ENCODE measurements at regions of chr11 and their contacts with region 1.

Region 1: DNA sequence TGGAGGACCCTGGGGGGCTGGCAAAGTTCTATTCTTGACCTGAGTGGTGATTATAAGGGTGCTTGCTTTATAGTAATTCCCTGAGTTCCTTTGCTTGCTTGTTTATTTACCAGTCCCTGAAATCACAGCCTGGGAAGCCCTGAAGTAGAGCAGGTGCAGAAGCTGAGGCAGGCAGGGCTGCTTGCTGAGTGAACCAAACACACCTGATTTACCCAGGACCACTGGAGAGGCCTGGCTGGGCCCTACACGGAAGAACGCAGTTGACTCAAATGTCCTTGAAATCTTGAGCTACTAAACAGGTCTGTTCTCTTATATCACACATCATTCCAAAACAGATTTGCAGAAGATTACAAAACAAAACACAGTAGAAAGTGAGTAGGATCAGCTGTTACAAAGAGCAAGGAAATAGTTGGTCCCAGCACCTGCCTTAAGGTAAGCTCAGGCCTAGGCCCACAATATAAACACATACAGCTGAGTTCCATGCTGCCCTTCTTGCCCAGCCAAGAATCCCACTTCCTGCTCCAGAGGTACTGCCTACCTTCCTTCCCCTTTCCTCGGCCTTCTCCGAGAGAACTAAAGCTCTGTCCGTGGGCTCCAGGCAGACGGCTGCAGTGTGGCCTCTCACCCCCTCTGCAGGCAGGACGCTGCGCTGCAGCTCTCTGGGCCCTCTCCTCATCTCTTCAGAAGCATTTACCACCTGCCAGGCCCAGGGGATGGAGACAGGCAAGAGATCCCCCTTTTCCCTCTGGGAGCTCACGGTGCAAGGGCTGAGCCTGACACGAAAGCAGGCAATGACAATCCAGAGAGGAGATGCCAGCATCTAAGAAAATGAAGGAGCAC is 46.1 kb upstream of the SCUBE2 start:
- DNase-seq: peak; percentile 68 to 74
- ATAC-seq: peak; percentile 89 to 95
- H3K4me3 ChIP-seq: no peak overlapping the region
- H3K27ac ChIP-seq: peak overlapping the region in 1 of 2 experiments; percentile 83; a peak in 4 of 6 replicates
- H3K4me1 ChIP-seq: peaks cover 30% of the 10 kb centered on the region
- CTCF ChIP-seq: peak; percentile 84
- EP300 ChIP-seq: no peak
- POLR2A ChIP-seq: no peak
- RAD21 ChIP-seq: peak; percentile 86 to 87

Region 2: GRCh38 chr11:8906629-8907028 is 230.9 kb before region 1 on chr11:
- CTCF ChIA-PET with region 1: no interaction called
- POLR2A ChIA-PET with region 1: no interaction called
- DNase-seq: peak; percentile 65 to 84
- ATAC-seq: peak in 1 of 2 experiments; percentile 12; a peak in 3 of 6 replicates
- H3K4me3 ChIP-seq: no peak overlapping the region
- H3K27ac ChIP-seq: peak overlapping the region; percentile 66 to 83
- H3K4me1 ChIP-seq: peaks cover 42% of the 10 kb centered on the region
- CTCF ChIP-seq: no peak
- EP300 ChIP-seq: peak; percentile 55 to 80; a peak in 3 of 5 replicates
- POLR2A ChIP-seq: no peak
- RAD21 ChIP-seq: 0 out of 5 replicates have a peak, but pooled peaks of 1 of the 2 experiments have one; percentile 10

Region 3: GRCh38 chr11:8964324-8965320 is 172.9 kb before region 1 on chr11 and contains the start of gene TMEM9B:
- CTCF ChIA-PET with region 1: interaction called, 9 read pairs
- POLR2A ChIA-PET with region 1: interaction called, 12 read pairs
- DNase-seq: peak; percentile 87 to 92
- ATAC-seq: peak; percentile 93 to 94
- H3K4me3 ChIP-seq: peak within 1 kb of the TSS; percentile 78
- H3K27ac ChIP-seq: peak within 1 kb of the TSS; percentile 96
- H3K4me1 ChIP-seq: peaks cover 23% of the 10 kb centered on the region
- CTCF ChIP-seq: no peak
- EP300 ChIP-seq: no peak
- POLR2A ChIP-seq: peak; percentile 65
- RAD21 ChIP-seq: no peak; a peak in 1 of 5 replicates
- polyA plus RNA-seq, gene TMEM9B: 43.4 and 47.3 TPM in 2 replicates

Region 4: DNA sequence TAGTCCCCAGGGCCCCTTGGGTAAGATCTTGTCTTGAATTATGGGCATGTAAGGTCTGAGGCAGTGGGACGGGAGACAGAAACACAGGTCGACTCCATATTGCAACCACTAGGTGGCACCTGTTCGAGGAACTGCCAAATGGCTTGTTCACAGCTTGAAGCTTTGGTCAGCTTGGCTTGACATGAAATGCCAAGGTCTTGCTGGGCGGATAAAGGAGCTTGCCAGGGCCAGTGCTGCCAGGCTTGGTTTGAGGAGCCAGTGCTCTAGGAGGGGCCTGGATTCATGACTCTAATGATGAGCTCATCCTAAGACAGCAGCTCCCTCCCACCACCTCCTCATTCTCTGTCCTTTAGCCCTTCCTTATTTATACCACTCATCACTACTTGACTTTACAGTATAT is 121.8 kb before region 1 on chr11:
- CTCF ChIA-PET with region 1: interaction called, 160 read pairs
- POLR2A ChIA-PET with region 1: interaction called, 5 read pairs
- DNase-seq: peak; percentile 84 to 86
- ATAC-seq: peak; percentile 95 to 98
- H3K4me3 ChIP-seq: no peak overlapping the region
- H3K27ac ChIP-seq: no peak overlapping the region
- H3K4me1 ChIP-seq: no peaks in the 10 kb centered on the region
- CTCF ChIP-seq: peak; percentile 82
- EP300 ChIP-seq: no peak
- POLR2A ChIP-seq: no peak
- RAD21 ChIP-seq: peak; percentile 67 to 68

Region 5: GRCh38 chr11:9030601-9031000 is 106.9 kb before region 1 on chr11:
- CTCF ChIA-PET with region 1: interaction called, 12 read pairs
- POLR2A ChIA-PET with region 1: no interaction called
- DNase-seq: no peak
- ATAC-seq: no peak
- H3K4me3 ChIP-seq: no peak overlapping the region
- H3K27ac ChIP-seq: no peak overlapping the region
- H3K4me1 ChIP-seq: no peaks in the 10 kb centered on the region
- CTCF ChIP-seq: no peak
- EP300 ChIP-seq: no peak
- POLR2A ChIP-seq: no peak
- RAD21 ChIP-seq: no peak

Region 6: DNA sequence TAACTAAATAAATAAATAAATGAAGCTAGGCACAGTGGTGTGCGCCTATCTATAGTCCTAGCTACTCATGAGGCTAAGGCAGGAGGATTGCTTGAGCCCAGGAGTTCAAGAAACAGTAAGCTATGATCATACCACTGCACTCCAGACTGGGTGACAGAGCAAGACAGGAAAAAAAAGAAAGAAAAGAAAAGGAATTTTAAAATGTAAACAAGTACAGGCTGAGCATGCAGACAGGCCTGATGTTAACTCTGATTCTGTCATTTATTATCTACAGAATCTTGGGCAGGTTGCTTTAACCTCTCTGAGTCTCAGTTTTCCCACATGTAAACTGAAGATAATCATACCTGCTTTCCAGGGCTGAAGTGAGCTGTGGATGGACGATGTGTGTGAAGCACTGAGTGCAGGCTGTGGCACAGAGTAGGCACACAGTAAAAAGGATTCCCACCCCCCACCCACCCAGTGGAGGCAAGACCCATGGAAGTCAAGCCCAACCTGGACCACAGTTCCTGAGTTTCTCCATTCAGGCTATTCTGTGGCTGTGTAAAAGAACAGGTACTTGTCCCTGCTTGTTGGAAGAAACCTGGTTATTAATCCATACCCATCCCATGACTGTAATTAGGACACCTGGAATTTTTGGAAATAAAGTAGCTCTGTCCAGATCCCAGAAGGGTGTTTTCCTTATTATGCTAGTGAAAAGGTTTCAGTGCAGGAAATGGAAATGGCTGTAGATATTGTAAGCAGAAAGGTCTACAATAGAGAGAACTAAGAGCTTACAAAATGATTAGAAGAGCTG is 27.4 kb before region 1 on chr11:
- CTCF ChIA-PET with region 1: interaction called, 12 read pairs
- POLR2A ChIA-PET with region 1: no interaction called
- DNase-seq: no peak
- ATAC-seq: no peak
- H3K4me3 ChIP-seq: no peak overlapping the region
- H3K27ac ChIP-seq: no peak overlapping the region
- H3K4me1 ChIP-seq: no peaks in the 10 kb centered on the region
- CTCF ChIP-seq: no peak
- EP300 ChIP-seq: no peak
- POLR2A ChIP-seq: no peak
- RAD21 ChIP-seq: no peak

Region 7: GRCh38 chr11:9150501-9150900 is 13.0 kb after region 1 on chr11:
- CTCF ChIA-PET with region 1: interaction called, 16 read pairs
- POLR2A ChIA-PET with region 1: no interaction called
- DNase-seq: no peak
- ATAC-seq: no peak
- H3K4me3 ChIP-seq: no peak overlapping the region
- H3K27ac ChIP-seq: no peak overlapping the region
- H3K4me1 ChIP-seq: no peaks in the 10 kb centered on the region
- CTCF ChIP-seq: no peak
- EP300 ChIP-seq: no peak
- POLR2A ChIP-seq: no peak
- RAD21 ChIP-seq: no peak

Region 8: DNA sequence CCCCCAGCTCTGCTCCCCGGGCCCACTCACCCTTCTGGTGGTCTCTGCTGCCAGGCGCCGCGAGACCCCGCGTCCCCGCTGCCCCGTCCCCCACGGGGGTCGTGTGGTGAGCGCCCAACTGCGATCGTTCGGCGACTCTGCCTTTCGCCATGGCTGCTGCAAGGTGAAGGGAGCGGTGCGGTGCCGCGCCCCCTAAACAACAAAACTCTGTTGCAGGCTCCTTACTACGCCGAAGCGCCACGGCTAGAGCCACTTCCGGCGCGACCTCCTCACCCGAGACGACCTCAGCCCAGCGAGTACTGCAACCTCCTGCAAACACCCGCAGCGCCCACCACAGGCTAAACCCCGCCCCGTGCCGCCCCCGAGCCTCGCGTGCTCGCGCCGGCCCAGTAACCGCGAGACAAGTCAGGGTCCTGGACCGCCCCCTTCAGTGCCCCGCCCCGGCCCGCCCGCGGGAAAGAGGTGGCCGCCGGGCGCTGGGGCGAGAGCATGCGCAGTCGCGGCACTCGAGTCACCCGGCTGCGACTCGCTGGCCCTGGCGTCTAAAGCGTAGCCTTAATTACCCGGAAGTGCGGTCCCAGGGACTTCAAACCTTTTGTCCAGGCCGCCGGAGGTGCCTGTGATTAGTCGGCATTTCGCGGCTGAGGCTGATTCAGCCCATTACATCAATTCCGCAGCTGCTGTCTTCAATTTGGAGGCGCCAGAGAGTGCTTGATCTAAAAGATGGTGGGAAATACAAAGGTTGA is 177.0 kb after region 1 on chr11 and contains the start of gene TMEM41B:
- CTCF ChIA-PET with region 1: no interaction called
- POLR2A ChIA-PET with region 1: no interaction called
- DNase-seq: peak; percentile 99
- ATAC-seq: peak; percentile 93 to 97
- H3K4me3 ChIP-seq: peak within 1 kb of the TSS; percentile 78
- H3K27ac ChIP-seq: peak within 1 kb of the TSS; percentile 93 to 96
- H3K4me1 ChIP-seq: peaks cover 38% of the 10 kb centered on the region
- CTCF ChIP-seq: no peak
- EP300 ChIP-seq: no peak
- POLR2A ChIP-seq: peak; percentile 84
- RAD21 ChIP-seq: peak in 1 of 2 experiments; percentile 11; a peak in 1 of 5 replicates
- polyA plus RNA-seq, gene TMEM41B: 57.7 and 71.4 TPM in 2 replicates